ENCODE measurements at regions of chr22 and their contacts with region 1.

Region 1: DNA sequence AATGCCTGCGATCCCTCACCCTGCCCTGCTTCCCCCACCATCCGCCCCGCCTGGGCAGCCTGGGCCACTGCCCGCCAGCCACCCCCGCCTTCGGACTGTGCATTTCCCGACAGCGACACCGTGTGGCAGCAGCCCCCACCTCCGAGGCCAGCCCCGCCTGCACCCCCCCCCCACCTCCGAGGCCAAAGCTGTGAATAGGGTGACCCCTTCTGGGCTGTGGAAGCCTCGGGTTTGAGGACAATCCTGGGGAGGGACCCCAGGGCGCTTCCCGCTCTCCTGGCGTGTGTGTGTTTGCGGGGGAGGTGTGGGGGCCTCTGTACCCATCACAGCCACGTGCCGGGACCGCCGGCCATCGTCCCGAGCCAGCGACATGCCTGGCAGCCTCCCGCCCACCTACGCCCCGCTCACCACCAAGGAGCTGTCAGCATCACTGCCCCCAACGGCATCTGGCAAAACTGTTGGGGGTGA is 33.8 kb upstream of the PPARA start:
- DNase-seq: peak; percentile 96
- ATAC-seq: peak; percentile 72 to 73

Region 2: GRCh38 chr22:46006379-46007002 is 110.0 kb before region 1 on chr22:
- intact Hi-C with region 1: loop called (anchors 1 to 2 kb)
- DNase-seq: peak; percentile 96
- ATAC-seq: peak; percentile 57 to 68

Region 3: GRCh38 chr22:46256358-46256958 is 139.9 kb after region 1 on chr22:
- intact Hi-C with region 1: no loop called
- DNase-seq: no peak
- ATAC-seq: no peak

Measured in left cardiac atrium (tissue), 4 donors.